ENCODE measurements at regions of chr17 and their contacts with region 1.

Region 1: DNA sequence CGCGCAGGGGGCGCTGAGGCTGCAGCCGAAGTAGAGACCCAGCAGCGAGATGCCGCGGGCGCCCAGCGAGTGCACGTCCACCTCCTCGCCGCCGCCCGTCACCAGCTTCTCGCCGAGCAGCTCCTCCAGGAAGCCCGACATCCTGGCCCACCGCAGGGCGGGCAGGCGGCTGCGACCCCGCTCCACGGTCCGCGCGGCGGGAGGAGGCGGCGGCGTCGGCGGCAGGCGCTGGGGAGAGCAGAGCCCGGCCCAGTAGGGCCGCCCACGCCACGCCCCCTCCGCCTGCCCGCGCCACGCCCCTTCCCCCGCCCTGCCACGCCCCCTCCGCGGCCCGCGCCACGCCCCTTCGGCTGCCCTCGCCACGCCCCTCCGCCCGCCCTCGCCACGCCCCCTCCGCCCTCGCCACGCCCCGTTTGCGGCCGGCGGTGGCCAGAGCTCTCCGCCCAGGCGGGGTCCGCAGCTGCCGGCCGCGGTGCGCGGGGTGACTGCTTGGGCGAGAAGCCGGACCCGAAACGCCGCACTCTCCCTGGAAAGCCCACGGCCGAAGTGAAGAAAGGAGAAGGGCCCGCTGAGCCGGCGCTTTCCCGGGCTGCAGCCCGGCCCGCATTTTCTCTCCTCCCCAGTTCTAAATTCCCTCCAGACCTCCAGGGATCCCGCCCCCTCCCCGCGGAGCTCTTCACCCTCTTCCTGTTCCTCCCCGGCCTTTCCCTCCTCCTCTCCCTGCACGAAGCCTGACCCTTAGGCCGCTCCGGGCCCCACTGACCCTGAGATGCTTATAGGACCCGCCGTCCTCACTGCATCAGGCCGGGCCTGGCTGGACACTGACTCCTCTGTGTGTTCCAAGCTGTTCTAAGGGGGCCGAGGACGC is at the start of gene NXN:
- DNase-seq: peak; percentile 81
- H3K4me3 ChIP-seq: peak within 1 kb of the TSS; percentile 68
- H3K27ac ChIP-seq: peak within 1 kb of the TSS; percentile 67
- H3K4me1 ChIP-seq: peaks cover 17% of the 10 kb centered on the region
- CTCF ChIP-seq: peak; percentile 28; the same call in 1 of the 2 replicates
- total RNA-seq, gene NXN: 0.93 and 1.3 TPM in 2 replicates

Region 2: DNA sequence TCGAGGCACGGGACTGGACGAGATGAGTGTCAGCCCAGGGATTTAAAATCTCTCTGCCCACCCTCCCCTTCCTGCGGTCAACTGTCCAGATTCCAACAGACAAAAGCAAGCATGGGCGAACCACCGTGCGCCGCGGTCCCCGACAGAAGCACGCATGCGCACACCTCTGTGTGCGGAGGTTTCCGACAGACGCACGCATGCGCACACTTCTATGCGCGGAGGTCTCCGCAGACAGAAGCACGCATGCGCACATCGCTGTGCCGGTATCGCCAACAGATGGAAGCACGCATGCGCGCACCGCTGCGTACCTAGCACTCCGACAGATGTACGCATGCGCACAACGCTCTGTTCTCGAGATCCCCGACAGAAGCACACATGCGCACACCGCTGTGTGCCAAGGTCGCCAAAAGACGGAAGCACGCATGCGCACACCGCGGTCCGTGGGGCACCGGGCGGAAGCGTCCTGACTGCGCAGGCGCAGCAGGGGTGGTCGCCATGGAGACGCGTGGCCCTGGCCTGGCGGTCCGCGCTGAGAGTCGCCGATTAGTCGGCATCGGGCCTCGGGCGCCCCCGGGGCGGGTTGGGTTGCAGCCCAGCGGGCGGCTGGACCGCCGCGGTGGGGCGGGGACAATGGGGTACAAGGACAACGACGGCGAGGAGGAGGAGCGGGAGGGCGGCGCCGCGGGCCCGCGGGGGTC is 569.8 kb before region 1 on chr17:
- CTCF ChIA-PET with region 1: no interaction called
- POLR2A ChIA-PET with region 1: no interaction called
- intact Hi-C with region 1: loop called (anchors 1 kb)
- DNase-seq: peak; percentile 100
- H3K4me3 ChIP-seq: peak overlapping the region; percentile 79
- H3K27ac ChIP-seq: peak overlapping the region; percentile 35
- H3K4me1 ChIP-seq: peaks cover 13% of the 10 kb centered on the region
- CTCF ChIP-seq: no peak

Region 3: DNA sequence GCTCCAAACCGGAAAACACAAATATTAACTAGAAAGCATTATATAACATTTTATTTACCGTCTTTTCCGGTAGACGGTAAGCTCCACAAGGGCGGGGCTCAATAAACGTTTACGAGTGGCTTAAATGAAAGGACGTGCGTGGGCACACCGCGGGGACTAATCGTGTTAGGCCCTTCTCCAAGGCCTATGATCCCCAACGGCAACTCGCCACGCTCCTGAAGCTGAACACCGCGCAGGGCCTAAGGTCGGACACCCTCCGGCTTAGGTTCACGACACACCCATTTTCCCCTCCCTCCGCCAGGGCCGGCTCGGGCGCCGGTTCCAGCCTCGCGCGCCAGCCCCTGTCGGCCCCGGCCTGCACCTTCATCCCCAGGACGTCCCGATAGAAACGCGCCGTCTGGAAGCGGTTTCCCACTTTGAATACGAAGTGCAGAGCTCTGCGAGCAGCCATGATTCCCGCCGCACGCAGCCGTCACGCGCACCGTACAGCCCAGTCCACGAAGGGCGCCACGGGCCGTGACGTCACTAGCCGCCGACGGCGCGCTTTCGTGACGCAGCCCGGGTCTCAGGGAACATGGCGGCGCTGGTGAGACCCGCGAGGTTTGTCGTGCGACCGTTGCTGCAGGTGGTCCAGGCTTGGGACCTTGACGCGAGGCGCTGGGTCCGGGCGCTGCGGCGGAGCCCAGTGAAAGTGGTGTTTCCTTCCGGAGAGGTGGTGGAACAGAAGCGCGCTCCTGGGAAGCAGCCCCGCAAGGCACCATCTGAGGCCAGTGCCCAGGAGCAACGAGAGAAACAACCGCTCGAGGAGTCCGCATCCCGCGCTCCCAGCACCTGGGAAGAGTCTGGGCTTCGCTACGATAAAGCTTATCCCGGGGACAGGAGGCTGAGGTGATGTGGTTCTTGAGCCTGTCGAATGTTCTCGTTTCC is 197.7 kb before region 1 on chr17 and contains the starts of genes GLOD4 and MRM3:
- CTCF ChIA-PET with region 1: no interaction called
- POLR2A ChIA-PET with region 1: interaction called, 3 read pairs
- intact Hi-C with region 1: loop called (anchors 2 kb)
- DNase-seq: peak; percentile 88
- H3K4me3 ChIP-seq: peak within 1 kb of the TSS; percentile 95
- H3K27ac ChIP-seq: peak within 1 kb of the TSS; percentile 50
- H3K4me1 ChIP-seq: peaks cover 21% of the 10 kb centered on the region
- CTCF ChIP-seq: 0 out of 2 replicates have a peak, but pooled peaks have one; percentile 7
- total RNA-seq, gene GLOD4: 48.4 and 80.2 TPM in 2 replicates
- total RNA-seq, gene MRM3: 35.8 and 47.1 TPM in 2 replicates

Region 4: GRCh38 chr17:879549-880442 is 100.0 kb before region 1 on chr17:
- CTCF ChIA-PET with region 1: no interaction called
- POLR2A ChIA-PET with region 1: no interaction called
- intact Hi-C with region 1: loop called (anchors 1 kb)
- DNase-seq: peak; percentile 70
- H3K4me3 ChIP-seq: no peak overlapping the region
- H3K27ac ChIP-seq: no peak overlapping the region
- H3K4me1 ChIP-seq: no peaks in the 10 kb centered on the region
- CTCF ChIP-seq: peak; percentile 71

Region 5: DNA sequence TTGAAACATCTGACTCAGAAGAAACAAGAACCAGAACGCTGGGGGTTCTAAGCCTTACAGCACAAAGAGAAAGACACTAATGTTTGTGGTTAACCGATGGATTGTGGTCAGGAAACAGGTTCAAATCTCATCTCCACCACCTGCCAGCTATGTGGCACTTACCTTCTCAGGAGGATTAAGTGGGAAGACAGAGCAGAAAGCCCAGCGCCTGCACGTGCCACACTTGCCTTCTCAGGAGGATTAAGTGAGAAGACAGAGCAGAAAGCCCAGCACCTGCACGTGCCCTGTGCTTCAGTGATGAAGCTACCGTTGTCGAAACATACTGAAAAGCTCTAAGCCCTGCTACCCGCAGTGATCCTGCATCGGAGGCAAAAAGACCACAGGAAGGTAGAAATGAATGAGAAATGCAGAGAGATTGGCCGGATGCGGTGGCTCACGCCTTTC is 90.8 kb before region 1 on chr17:
- CTCF ChIA-PET with region 1: no interaction called
- POLR2A ChIA-PET with region 1: no interaction called
- intact Hi-C with region 1: loop called (anchors 2 kb)
- DNase-seq: peak; percentile 89
- H3K4me3 ChIP-seq: no peak overlapping the region
- H3K27ac ChIP-seq: peak overlapping the region; percentile 41
- H3K4me1 ChIP-seq: peaks cover 14% of the 10 kb centered on the region
- CTCF ChIP-seq: no peak